ENCODE measurements at regions of chr1 and their contacts with region 1.

Region 1: GRCh38 chr1:51690285-51690961 is 73.5 kb downstream of the OSBPL9 start:
- DNase-seq: peak; percentile 15 to 93
- ATAC-seq: peak; percentile 92 to 98
- H3K4me3 ChIP-seq: peak overlapping the region; percentile 23; the same call in 1 of the 3 replicates
- H3K27ac ChIP-seq: peak overlapping the region; percentile 92 to 95
- H3K4me1 ChIP-seq: peaks cover 70% of the 10 kb centered on the region
- CTCF ChIP-seq: no peak
- EP300 ChIP-seq: peak; percentile 69 to 82; a peak in 4 of 5 replicates
- POLR2A ChIP-seq: no peak
- RAD21 ChIP-seq: no peak; a peak in 1 of 5 replicates

Region 2: DNA sequence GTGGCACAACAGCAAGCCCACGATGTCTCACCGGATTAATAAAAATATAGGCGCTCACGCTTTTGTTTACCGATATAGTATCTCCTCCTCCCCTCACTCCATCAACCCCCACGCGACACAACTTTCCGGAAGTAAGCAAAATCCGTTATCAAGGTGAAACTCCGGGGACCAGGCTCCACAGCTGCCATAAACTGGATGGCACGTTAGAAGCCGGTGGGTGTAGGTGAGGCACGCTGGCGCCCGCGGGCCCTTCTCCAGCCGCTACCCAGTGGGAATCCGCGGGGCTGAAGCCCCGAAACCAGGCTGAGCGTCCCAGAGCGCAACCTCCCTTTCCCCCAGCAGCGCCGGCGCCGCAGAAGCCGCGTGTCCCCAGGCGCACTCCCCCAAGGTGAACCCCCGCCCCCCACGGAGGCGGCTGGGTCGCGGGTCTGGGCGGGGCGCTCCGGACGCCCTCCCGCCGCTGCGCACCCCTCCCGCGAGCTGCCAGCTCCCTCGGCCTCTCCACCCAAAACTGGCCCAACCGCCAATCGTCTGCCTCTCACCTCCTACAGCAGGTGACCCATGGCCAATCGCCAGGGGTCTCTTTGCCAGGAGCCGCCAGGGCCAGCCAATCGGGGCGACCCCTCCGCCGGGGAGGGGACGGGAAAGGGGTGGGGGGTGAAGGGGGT is 38.9 kb after region 1 on chr1:
- CTCF ChIA-PET with region 1: no interaction called
- POLR2A ChIA-PET with region 1: interaction called, 10 read pairs
- DNase-seq: peak; percentile 90 to 92
- ATAC-seq: peak; percentile 98
- H3K4me3 ChIP-seq: peak overlapping the region; percentile 85
- H3K27ac ChIP-seq: peak overlapping the region; percentile 85 to 98
- H3K4me1 ChIP-seq: peaks cover 42% of the 10 kb centered on the region
- CTCF ChIP-seq: no peak
- EP300 ChIP-seq: no peak
- POLR2A ChIP-seq: peak; percentile 56
- RAD21 ChIP-seq: no peak; a peak in 2 of 5 replicates

Region 3: DNA sequence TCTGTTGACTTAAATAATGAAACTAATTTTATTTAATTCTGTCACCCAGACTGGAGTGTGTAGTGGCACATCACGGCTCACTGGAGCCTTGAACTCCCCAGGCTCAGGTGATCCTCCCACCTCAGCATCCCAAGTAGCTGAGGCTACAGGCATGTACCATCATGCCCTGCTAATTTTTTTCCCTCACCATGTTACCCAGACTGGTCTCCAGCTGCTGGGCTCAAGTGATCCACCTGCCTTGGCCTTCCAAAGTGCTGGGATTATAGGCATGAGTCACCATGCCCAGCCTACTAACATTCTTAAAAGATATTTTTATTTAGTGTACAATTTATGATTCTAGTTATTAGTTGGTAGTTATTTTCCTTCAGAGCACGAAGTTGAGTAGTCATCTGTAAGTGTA is 138.6 kb after region 1 on chr1:
- CTCF ChIA-PET with region 1: no interaction called
- POLR2A ChIA-PET with region 1: no interaction called
- DNase-seq: no peak
- ATAC-seq: no peak
- H3K4me3 ChIP-seq: no peak overlapping the region
- H3K27ac ChIP-seq: no peak overlapping the region
- H3K4me1 ChIP-seq: no peaks in the 10 kb centered on the region
- CTCF ChIP-seq: no peak
- EP300 ChIP-seq: no peak
- POLR2A ChIP-seq: no peak
- RAD21 ChIP-seq: no peak

Measured in A549 (cell line).